PC-3 (cell line): ENCODE measurements at regions of chr2 and their contacts with region 1.

Region 1: GRCh38 chr2:8312861-8313830 is 368.7 kb upstream of the ID2 start:
- DNase-seq: peak; percentile 74
- ATAC-seq: peak; percentile 84
- H3K4me3 ChIP-seq: no peak overlapping the region
- H3K27ac ChIP-seq: 0 out of 2 replicates have a peak overlapping the region, but pooled peaks have one; percentile 0
- H3K4me1 ChIP-seq: peaks cover 23% of the 10 kb centered on the region
- H3K27me3 ChIP-seq: no peaks in the 10 kb centered on the region
- CTCF ChIP-seq: no peak

Region 2: DNA sequence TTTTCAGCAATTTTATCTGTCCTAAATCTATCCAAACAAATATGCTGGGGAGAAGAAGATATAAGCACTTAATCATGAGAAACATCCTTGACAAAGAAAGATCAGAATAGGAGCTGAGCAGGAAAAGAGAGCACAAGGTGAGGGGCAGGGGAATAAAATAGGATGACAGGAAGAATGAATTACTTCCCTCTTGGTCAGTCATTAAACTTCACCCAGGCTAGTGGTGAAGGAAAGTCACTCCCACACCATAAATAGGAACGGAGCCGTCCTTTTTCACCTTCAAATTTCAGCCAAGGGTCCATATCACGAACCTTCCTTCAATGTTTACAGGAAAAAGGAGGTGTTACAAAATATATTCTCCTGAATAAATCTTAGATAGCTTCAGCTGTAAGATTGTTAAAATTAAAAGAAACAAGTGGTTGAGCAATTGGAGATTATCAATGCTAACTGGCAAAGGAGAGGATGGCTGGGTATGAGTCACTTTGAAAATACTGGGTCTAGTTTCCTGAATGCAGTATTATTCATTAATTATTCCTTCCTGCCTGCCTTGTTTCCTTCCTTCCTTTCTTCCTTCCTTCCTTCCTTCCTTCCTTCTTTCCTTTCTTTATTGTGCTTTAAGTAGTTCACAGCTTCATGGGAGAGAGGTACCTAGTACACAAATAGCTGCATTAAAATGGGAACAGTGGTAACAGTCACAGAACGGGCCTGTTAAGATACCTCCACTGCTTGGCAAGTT is 76.4 kb after region 1 on chr2:
- CTCF ChIA-PET with region 1: no interaction called
- POLR2A ChIA-PET with region 1: no interaction called
- intact Hi-C with region 1: loop called (anchors 5 kb)
- DNase-seq: peak; percentile 63
- ATAC-seq: peak; percentile 81
- H3K4me3 ChIP-seq: no peak overlapping the region
- H3K27ac ChIP-seq: peak overlapping the region; percentile 49
- H3K4me1 ChIP-seq: peaks cover 16% of the 10 kb centered on the region
- H3K27me3 ChIP-seq: no peaks in the 10 kb centered on the region
- CTCF ChIP-seq: no peak

Region 3: GRCh38 chr2:8514796-8515758 is 201.9 kb after region 1 on chr2:
- CTCF ChIA-PET with region 1: no interaction called
- POLR2A ChIA-PET with region 1: no interaction called
- intact Hi-C with region 1: no loop called
- DNase-seq: no peak
- ATAC-seq: no peak
- H3K4me3 ChIP-seq: no peak overlapping the region
- H3K27ac ChIP-seq: no peak overlapping the region
- H3K4me1 ChIP-seq: no peaks in the 10 kb centered on the region
- H3K27me3 ChIP-seq: no peaks in the 10 kb centered on the region
- CTCF ChIP-seq: no peak